Heart left ventricle (tissue), 16 donors: ENCODE measurements at regions of chr17 and their contacts with region 1.

Region 1: GRCh38 chr17:7021993-7022778 is 664 bp upstream of the BCL6B start:
- DNase-seq: peak; percentile 83 to 92 (median 86)
- ATAC-seq: peak; percentile 38 to 71 (median 60)
- H3K4me3 ChIP-seq: peak overlapping the region; percentile 32 to 79 (median 62)
- H3K27ac ChIP-seq: peak overlapping the region; percentile 80 to 99 (median 96)
- H3K4me1 ChIP-seq: peaks cover 8 to 82% (median 42%) of the 10 kb centered on the region in 12 donors
- H3K27me3 ChIP-seq: peaks cover 0 to 24% (median 0%) of the 10 kb centered on the region in 9 donors
- CTCF ChIP-seq: peak; percentile 87 to 99 (median 98)
- POLR2A ChIP-seq: peak in 1 of 2 donors; percentile 52

Region 2: GRCh38 chr17:6796887-6797490 is 225.2 kb before region 1 on chr17:
- intact Hi-C with region 1: no loop called
- DNase-seq: no peak
- ATAC-seq: no peak
- H3K4me3 ChIP-seq: no peak overlapping the region
- H3K27ac ChIP-seq: no peak overlapping the region
- H3K4me1 ChIP-seq: no peaks in the 10 kb centered on the region
- H3K27me3 ChIP-seq: peaks cover 0 to 15% (median 2%) of the 10 kb centered on the region in 9 donors
- CTCF ChIP-seq: no peak
- POLR2A ChIP-seq: no peak

Region 3: DNA sequence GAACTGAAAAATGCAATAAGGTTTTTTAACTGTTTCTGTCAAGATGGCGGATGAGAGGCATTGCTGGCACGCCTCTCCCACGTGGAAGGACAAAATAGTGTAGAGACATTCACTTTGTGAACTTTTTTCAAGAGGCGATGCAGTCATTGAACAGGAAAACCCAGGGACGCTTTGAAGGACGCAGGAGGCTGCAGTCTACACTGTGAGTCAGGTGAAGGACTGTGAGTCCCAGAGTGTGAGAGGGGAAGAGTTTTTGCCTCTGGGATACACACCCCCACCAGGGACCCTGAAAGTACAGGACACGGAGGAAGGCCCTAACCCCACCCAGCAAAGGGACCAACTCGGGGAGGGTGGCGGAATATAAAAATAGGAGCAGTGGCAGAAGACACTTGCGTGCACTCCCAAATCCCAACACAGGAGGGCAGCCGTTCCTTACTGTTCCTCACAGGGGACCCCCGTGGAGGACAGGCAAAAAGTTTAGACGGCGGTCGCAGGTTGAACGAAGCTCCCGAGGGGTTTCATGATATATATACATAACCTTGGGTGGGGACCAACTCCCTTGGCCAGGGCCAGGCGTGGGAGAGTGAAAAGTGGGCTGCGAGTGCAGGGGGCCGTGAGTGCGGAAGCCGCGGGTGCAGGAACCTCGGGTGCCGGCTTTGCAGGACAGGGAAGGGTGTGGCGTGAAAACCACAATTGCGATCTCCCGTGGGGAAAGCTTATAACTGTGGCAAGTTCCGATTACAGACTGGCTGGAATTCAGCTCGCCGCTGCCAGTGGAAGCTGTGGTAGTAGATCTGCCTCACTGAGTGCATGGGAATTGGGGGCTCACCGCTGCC is 108.4 kb before region 1 on chr17:
- intact Hi-C with region 1: loop called in 2 of 10 experiments (anchors 1 to 5 kb)
- DNase-seq: peak; percentile 72 to 81 (median 76)
- ATAC-seq: peak; percentile 77 to 90 (median 82)
- H3K4me3 ChIP-seq: peak overlapping the region in 9 of 12 donors; percentile 16 to 50 (median 37)
- H3K27ac ChIP-seq: no peak overlapping the region
- H3K4me1 ChIP-seq: peaks cover 0 to 11% (median 6%) of the 10 kb centered on the region in 12 donors
- H3K27me3 ChIP-seq: peaks cover 0 to 12% (median 0%) of the 10 kb centered on the region in 9 donors
- CTCF ChIP-seq: peak; percentile 77 to 88 (median 84)
- POLR2A ChIP-seq: no peak